ENCODE measurements at regions of chr1 and their contacts with region 1.

Region 1: DNA sequence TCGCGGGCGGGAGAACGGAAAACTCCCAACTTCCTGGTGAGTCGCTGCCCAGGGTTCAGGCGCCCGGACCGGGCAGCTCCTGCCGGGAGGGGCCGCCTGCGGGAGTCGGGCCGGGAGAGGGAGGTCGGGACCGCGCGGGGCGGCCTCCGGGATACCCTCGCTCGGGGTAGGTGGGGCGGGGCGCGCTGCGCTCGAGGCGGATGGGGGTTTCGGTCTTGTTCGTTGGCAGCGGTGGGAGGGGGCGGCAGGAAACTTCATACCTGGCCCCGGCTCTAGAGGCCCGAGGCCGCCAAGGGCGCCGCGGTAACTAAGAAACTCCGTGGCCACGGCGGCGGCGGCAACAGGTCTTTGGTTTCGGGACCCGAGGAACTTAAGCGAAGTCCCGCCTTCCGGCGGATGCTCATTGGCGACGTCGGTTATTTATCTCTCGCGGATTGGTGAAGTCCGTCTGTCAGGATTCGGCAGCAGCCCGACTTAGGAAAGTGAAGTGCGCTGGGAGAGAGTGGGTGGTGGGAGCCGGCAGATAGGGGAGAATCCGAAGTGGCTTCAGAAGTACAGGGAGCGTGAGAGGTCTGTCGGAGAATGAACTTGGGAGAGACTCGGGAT is 546 bp downstream of the NEK7 start:
- H3K4me3 Mint-ChIP-seq: peak overlapping the region; percentile 93
- H3K27ac Mint-ChIP-seq: peak overlapping the region; percentile 93
- H3K4me1 Mint-ChIP-seq: peaks cover 49% of the 10 kb centered on the region
- H3K27me3 Mint-ChIP-seq: no peaks in the 10 kb centered on the region

Region 2: DNA sequence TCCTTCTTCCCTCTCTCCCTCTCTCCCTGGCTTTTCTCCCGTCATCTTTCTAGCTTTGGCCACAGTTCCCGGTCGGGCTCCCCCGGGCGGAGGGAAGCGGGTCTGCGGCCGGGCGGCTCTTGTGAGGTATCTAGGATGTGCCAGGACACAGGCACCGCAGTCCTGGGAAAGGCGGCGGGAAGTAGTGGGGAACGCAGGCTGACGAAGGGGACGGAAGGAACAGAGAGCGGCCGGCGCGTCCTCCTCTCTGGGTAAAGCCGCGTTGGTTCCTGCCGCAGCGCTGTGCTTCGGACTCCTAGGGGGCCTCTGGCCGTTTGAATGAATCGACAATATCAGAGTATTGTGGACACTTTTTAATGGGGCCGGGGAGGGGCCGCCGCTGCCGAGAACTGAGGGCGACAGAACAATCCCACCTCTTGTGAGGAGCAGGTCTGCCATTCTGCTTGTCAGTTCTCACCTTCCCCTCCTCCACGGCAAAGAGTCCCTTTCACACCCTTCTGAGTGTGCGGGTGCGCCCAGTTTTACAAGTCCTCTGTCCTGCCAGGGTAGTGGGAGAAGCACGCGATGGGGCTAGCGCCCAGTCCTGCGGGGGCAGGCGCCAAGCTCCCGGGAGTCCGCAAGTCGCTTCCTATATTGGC is 241.4 kb before region 1 on chr1:
- intact Hi-C with region 1: loop called (anchors 10 kb)
- H3K4me3 Mint-ChIP-seq: peak overlapping the region; percentile 37
- H3K27ac Mint-ChIP-seq: no peak overlapping the region
- H3K4me1 Mint-ChIP-seq: peaks cover 79% of the 10 kb centered on the region
- H3K27me3 Mint-ChIP-seq: peaks cover 99% of the 10 kb centered on the region

Region 3: DNA sequence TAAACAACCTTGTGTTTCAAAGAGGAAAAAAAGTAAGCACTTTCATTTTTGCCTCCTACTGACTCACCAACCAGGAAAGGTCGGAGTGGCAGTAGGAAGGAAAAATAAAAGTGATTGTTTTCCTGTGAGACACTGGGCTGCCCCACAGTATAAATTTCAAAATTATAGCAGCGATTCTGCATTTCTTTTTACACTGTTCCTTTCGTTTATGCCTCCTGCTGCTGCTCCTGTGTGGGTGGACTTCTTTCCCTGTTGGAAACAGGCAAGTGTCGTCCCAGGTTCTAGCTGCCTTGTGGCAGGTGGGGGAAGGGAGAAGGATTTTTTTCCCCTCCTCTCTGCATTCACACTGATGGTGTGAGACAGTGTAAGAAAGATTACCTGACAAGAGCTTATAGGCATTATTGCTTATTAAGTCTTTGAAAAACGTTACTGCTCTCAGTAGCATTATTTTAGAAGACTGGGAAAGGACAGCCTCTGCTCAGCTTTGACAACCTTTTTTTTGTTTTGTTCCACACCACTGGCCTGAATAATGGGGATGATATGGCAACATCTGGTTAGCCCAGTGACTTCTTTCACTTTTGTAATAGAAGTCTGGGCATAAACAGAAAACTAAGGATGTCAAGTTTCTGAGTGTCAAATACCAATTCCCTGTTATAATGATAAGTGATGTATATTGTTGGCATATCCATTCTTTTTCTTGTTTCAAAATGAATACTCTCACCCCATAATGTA is 77.3 kb after region 1 on chr1:
- intact Hi-C with region 1: loop called (anchors 5 kb)
- H3K4me3 Mint-ChIP-seq: no peak overlapping the region
- H3K27ac Mint-ChIP-seq: no peak overlapping the region
- H3K4me1 Mint-ChIP-seq: peaks cover 22% of the 10 kb centered on the region
- H3K27me3 Mint-ChIP-seq: no peaks in the 10 kb centered on the region

Region 4: DNA sequence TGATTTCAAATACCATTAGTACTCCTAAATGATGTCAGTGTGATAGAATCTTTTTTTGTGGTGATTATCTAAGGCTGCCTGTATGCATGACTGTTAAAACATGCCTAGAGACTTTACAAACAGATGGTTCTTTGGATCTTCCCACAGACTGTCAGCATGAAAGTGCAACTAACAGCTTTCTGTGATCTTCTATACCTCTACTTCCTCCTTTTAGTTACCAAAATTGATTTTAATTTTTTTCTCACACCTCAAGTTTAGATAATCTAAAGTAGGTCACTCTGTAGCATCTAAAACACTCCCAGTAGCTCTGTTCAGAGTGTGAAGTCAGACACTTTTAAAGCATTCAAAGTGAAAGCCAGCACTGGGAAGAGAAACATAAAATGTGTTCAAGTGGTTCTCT is 1016.0 kb after region 1 on chr1:
- intact Hi-C with region 1: no loop called
- H3K4me3 Mint-ChIP-seq: no peak overlapping the region
- H3K27ac Mint-ChIP-seq: no peak overlapping the region
- H3K4me1 Mint-ChIP-seq: peaks cover 5% of the 10 kb centered on the region
- H3K27me3 Mint-ChIP-seq: peaks cover 1% of the 10 kb centered on the region

Measured in dendritic cell treated with granulocyte-macrophage colony-stimulating factor and Interleukin-4, amounts not matched to agents 40 ng/mL and 50 ng/mL, for 4 days (primary cell).